RWPE1 (cell line): ENCODE measurements at regions of chr22 and their contacts with region 1.

Region 1: DNA sequence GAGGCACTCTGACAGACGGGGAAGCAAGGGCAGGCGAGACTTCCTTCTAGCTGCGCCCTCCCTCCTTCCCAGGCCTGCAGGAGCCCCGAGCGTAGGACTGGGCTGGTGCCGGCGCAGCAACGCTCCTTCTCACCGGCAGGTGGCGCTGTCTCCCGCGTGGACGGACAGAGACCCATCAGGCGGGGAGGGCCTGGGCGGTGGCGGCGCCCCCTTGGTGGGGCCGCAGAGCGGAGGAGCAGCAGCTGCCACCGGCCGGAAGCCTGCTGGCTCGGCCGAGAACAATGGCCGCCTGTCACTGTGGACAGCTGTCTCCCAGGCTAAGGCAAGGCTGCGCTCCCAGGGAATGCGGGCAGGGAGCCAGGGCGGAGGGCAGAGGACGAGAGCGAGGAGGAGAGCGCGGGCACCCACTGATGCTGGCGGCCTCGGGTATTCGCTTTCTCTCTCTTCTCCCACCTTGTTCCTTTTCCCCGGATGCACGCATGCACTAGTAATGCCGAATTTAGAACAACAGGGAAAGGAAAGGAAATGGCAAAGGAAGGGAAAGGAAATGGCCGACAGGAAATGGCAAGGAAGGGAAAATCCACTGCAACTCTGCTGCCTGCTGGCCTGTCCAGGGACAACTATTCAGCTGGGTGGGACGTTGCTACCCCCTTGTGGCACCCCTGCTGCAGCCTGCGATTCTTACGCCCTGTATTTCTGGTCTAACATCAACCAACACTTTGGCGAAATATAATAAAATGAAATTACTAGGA is 14.4 kb downstream of the PPM1F start:
- DNase-seq: peak; percentile 73
- H3K27ac ChIP-seq: peak overlapping the region; percentile 97
- CTCF ChIP-seq: peak; percentile 96

Region 2: GRCh38 chr22:21952586-21953571 is 14.6 kb after region 1 on chr22 and contains the start of gene PPM1F:
- CTCF ChIA-PET with region 1: interaction called, 27 read pairs
- POLR2A ChIA-PET with region 1: no interaction called
- DNase-seq: peak; percentile 84
- H3K27ac ChIP-seq: peak within 1 kb of the TSS; percentile 60
- CTCF ChIP-seq: peak; percentile 94